CD4-positive, alpha-beta T cell (primary cell): ENCODE measurements at regions of chr9 and their contacts with region 1.

Region 1: GRCh38 chr9:37565661-37566618 is 10.2 kb downstream of the FBXO10 start:
- DNase-seq: no peak
- ATAC-seq: no peak
- H3K4me3 ChIP-seq: no peak overlapping the region
- H3K4me3 Mint-ChIP-seq: no peak overlapping the region
- H3K27ac ChIP-seq: no peak overlapping the region
- H3K27ac Mint-ChIP-seq: no peak overlapping the region
- H3K4me1 ChIP-seq: no peaks in the 10 kb centered on the region
- H3K4me1 Mint-ChIP-seq: no peaks in the 10 kb centered on the region
- H3K27me3 ChIP-seq: no peaks in the 10 kb centered on the region
- H3K27me3 Mint-ChIP-seq: no peaks in the 10 kb centered on the region
- CTCF ChIP-seq: no peak

Region 2: GRCh38 chr9:37582548-37583157 is 16.7 kb after region 1 on chr9:
- CTCF ChIA-PET with region 1: no interaction called
- POLR2A ChIA-PET with region 1: no interaction called
- intact Hi-C with region 1: no loop called
- DNase-seq: peak in 3 of 14 experiments; percentile 45 to 63 (median 62)
- ATAC-seq: peak; percentile 79
- H3K4me3 ChIP-seq: no peak overlapping the region
- H3K4me3 Mint-ChIP-seq: no peak overlapping the region
- H3K27ac ChIP-seq: no peak overlapping the region
- H3K27ac Mint-ChIP-seq: no peak overlapping the region
- H3K4me1 ChIP-seq: no peaks in the 10 kb centered on the region
- H3K4me1 Mint-ChIP-seq: peaks cover 18% of the 10 kb centered on the region
- H3K27me3 ChIP-seq: no peaks in the 10 kb centered on the region
- H3K27me3 Mint-ChIP-seq: no peaks in the 10 kb centered on the region
- CTCF ChIP-seq: peak; percentile 69

Region 3: DNA sequence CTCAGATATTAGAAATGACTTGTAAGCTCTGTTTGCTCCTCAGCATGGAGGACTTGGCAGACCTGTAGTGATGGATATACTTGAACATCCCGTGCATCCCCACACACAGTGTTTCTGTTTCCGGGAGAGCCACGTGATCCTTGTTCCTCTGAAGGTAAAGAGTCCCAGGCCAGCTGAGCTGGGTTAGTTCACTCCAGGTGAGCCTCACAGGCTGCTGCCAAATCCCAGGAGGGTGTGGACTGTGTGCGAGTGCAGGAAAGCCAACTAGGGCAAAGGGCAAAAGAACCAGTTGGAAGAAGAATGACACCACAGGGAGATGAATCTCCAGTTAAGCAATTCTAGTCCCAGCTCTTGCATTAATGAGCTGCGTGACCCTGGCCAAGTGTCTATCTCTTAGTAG is 36.9 kb after region 1 on chr9:
- CTCF ChIA-PET with region 1: no interaction called
- POLR2A ChIA-PET with region 1: no interaction called
- intact Hi-C with region 1: no loop called
- DNase-seq: no peak
- ATAC-seq: no peak
- H3K4me3 ChIP-seq: no peak overlapping the region
- H3K4me3 Mint-ChIP-seq: no peak overlapping the region
- H3K27ac ChIP-seq: no peak overlapping the region
- H3K27ac Mint-ChIP-seq: no peak overlapping the region
- H3K4me1 ChIP-seq: no peaks in the 10 kb centered on the region
- H3K4me1 Mint-ChIP-seq: no peaks in the 10 kb centered on the region
- H3K27me3 ChIP-seq: peaks cover 3 to 5% of the 10 kb centered on the region in 2 experiments
- H3K27me3 Mint-ChIP-seq: peaks cover 49% of the 10 kb centered on the region
- CTCF ChIP-seq: no peak

Region 4: DNA sequence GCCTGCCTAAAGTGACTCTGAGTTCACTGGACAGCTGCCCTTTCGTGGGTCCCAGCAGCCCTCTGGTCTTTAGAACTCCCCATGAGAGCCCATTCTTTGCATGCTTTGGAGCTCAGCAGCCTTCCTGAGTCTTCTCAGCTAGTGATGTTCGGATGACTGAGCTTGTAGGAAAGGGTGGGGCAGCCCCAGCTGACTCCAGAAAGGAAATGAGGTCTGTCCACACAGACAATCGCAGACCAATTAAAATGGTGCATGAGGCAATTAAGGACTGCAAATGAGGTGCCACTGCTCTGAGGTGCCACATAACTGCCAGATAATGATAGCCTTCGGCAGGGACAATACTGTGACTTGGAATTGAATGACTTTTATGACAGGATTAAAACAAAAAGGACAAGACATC is 51.9 kb after region 1 on chr9:
- CTCF ChIA-PET with region 1: no interaction called
- POLR2A ChIA-PET with region 1: no interaction called
- intact Hi-C with region 1: loop called in 1 of 2 experiments (anchors 5 kb)
- DNase-seq: no peak
- ATAC-seq: no peak
- H3K4me3 ChIP-seq: no peak overlapping the region
- H3K4me3 Mint-ChIP-seq: no peak overlapping the region
- H3K27ac ChIP-seq: no peak overlapping the region
- H3K27ac Mint-ChIP-seq: no peak overlapping the region
- H3K4me1 ChIP-seq: peaks cover 3% of the 10 kb centered on the region
- H3K4me1 Mint-ChIP-seq: no peaks in the 10 kb centered on the region
- H3K27me3 ChIP-seq: no peaks in the 10 kb centered on the region
- H3K27me3 Mint-ChIP-seq: peaks cover 13% of the 10 kb centered on the region
- CTCF ChIP-seq: no peak